Right ventricle myocardium superior (tissue), 1 donor: ENCODE measurements at regions of chr1 and their contacts with region 1.

Region 1: GRCh38 chr1:67685067-67685557 is at the start of gene GADD45A:
- DNase-seq: peak; percentile 99
- ATAC-seq: peak; percentile 91
- total RNA-seq, gene GADD45A: 48.1 TPM

Region 2: GRCh38 chr1:67460676-67461500 is 224.2 kb before region 1 on chr1:
- intact Hi-C with region 1: no loop called
- DNase-seq: peak; percentile 73
- ATAC-seq: peak; percentile 96

Region 3: GRCh38 chr1:67561704-67562113 is 123.4 kb before region 1 on chr1:
- intact Hi-C with region 1: loop called (anchors 5 kb)
- DNase-seq: peak; percentile 95
- ATAC-seq: peak; percentile 93

Region 4: GRCh38 chr1:67646145-67647035 is 38.7 kb before region 1 on chr1:
- intact Hi-C with region 1: no loop called
- DNase-seq: peak; percentile 81
- ATAC-seq: peak; percentile 76

Region 5: DNA sequence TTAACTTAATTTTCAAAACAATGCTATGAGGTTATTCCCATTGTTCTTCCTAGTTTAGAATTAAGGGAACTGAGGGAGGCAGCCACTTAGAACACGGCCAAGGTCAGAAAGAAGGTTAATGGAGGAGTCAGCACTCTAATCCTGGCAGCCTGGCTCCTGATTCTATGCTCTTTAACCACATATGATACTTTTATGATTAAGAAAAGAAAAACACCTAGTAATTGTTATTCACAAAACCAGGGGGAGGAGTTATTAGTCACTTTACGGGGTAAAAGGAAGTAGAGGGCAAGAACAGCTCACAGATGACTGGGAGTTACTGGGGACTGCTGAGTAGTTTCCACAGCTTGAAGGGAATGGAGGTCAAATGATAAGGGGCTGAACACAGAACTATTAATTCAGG is 38.5 kb after region 1 on chr1:
- intact Hi-C with region 1: no loop called
- DNase-seq: no peak
- ATAC-seq: peak; percentile 67

Region 6: DNA sequence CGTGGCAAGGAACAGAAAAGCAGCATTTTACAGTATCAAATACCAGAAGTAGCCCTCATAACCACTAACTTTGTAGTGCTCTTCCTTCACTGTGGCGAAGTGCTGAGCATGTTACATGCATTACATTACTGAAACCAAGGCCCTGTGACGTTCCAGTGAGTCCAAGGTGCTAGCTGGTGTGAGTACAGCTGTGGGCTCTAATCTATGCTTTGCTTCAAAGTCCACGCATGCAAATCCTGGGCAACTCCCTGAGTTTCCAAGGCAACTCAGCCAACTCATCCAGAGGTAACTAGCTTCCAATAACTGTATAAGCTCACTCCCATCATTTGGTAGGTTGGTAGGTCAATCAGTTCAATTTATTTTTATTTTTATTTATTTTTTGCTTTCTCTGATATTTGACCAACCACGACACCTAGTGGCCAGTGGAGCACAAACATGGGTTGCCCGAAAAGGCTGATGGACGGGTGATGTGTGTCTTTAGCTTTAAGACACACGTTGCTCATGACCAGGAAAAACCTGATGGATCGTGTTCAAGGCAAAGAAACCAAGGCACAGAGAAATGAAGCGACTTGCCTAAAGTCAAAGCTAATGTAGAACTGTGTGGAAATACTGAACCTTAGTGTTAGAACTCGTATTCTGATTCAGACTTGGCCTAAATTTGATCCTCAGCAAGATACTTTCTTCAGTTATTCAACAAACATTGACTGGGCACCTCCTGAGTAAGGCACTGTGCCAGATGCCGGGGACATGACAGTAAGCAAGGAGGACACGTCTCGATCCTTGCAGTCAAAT is 75.1 kb after region 1 on chr1:
- intact Hi-C with region 1: loop called (anchors 5 kb)
- DNase-seq: peak; percentile 59
- ATAC-seq: peak; percentile 80

Region 7: GRCh38 chr1:67791686-67792475 is 106.8 kb after region 1 on chr1:
- intact Hi-C with region 1: no loop called
- DNase-seq: no peak
- ATAC-seq: peak; percentile 59